Spleen (tissue), 13 donors: ENCODE measurements at regions of chr1 and their contacts with region 1.

Region 1: DNA sequence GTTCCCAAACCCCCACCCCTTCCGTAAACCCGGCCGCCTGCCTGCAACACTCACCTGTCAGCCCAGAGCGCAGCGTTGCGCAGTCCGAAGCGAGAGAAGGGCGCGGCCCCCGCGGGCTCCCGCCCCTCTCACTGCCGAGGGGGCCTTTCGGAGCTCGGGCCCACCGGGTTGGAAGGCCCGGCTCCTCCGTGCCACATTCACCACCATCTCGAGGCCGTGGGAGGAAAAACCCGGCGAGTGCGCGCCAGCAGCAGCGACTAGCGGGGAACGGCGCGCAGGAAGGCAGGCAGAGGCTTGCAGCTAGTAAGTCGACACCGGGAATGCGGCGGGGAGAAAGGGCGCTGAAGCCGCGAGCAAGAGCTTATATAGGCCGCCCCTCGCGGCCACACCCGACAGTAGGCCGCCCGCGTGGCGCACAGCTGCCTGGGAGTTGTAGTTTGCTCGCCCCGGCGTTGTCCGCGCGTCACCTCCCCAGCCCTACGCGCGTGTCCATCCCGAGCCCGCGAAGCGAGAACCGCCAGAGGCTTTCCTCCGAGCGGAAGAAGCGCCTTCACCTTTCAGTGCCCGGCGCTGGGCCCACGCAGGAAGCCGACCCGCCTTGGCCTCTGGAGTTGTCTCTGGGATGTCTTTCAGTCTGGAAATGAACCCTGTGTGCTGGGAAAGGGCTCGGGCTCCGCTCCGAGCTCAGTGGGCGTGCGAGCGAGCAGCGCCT is 10.4 kb upstream of the RAB42 start:
- DNase-seq: peak; percentile 98
- H3K4me3 ChIP-seq: peak overlapping the region; percentile 72 to 94 (median 92)
- H3K27ac ChIP-seq: peak overlapping the region; percentile 77 to 94 (median 91)
- H3K4me1 ChIP-seq: peaks cover 19 to 59% (median 40%) of the 10 kb centered on the region in 6 donors
- H3K27me3 ChIP-seq: no peaks in the 10 kb centered on the region
- CTCF ChIP-seq: peak in 9 of 11 experiments; percentile 20 to 58 (median 37)
- POLR2A ChIP-seq: peak; percentile 71 to 81 (median 81)

Region 2: GRCh38 chr1:28505406-28506187 is 76.1 kb before region 1 on chr1 and contains the start of gene RCC1:
- intact Hi-C with region 1: loop called (anchors 5 kb)
- DNase-seq: peak; percentile 98
- H3K4me3 ChIP-seq: peak within 1 kb of the TSS; percentile 60 to 96 (median 84)
- H3K27ac ChIP-seq: peak within 1 kb of the TSS; percentile 79 to 95 (median 91)
- H3K4me1 ChIP-seq: peaks cover 34 to 52% (median 45%) of the 10 kb centered on the region in 6 donors
- H3K27me3 ChIP-seq: no peaks in the 10 kb centered on the region
- CTCF ChIP-seq: peak in 4 of 11 experiments; percentile 27 to 47 (median 36)
- POLR2A ChIP-seq: peak; percentile 78 to 97 (median 95)
- total RNA-seq, gene RCC1: 15.1 to 26.2 (median 22.4) TPM

Region 3: GRCh38 chr1:28648474-28649198 is 66.9 kb after region 1 on chr1 and contains the start of gene RNU11:
- intact Hi-C with region 1: no loop called
- DNase-seq: peak; percentile 92
- H3K4me3 ChIP-seq: peak within 1 kb of the TSS; percentile 20 to 65 (median 38)
- H3K27ac ChIP-seq: peak within 1 kb of the TSS; percentile 88 to 95 (median 95)
- H3K4me1 ChIP-seq: peaks cover 10 to 55% (median 33%) of the 10 kb centered on the region in 6 donors
- H3K27me3 ChIP-seq: no peaks in the 10 kb centered on the region
- CTCF ChIP-seq: peak in 3 of 11 experiments; percentile 10 to 15 (median 15)
- POLR2A ChIP-seq: peak; percentile 99 to 100 (median 100)
- total RNA-seq, gene RNU11: not detected